Posterior vena cava (tissue), 2 donors: ENCODE measurements at regions of chr4 and their contacts with region 1.

Region 1: GRCh38 chr4:14264437-14264836 is 636.9 kb upstream of the BOD1L1 start:
- DNase-seq: no peak

Region 2: GRCh38 chr4:14225747-14226146 is 38.7 kb before region 1 on chr4:
- intact Hi-C with region 1: loop called in 1 of 2 experiments (anchors 1 kb)
- DNase-seq: no peak